ENCODE measurements at regions of chr4 and their contacts with region 1.

Region 1: GRCh38 chr4:121307445-121308327 is 73.1 kb downstream of the QRFPR start:
- DNase-seq: peak; percentile 63
- ATAC-seq: peak; percentile 69
- H3K4me3 Mint-ChIP-seq: no peak overlapping the region
- H3K27ac Mint-ChIP-seq: peak overlapping the region; percentile 48
- H3K4me1 Mint-ChIP-seq: peaks cover 16% of the 10 kb centered on the region
- H3K27me3 Mint-ChIP-seq: peaks cover 2% of the 10 kb centered on the region

Region 2: DNA sequence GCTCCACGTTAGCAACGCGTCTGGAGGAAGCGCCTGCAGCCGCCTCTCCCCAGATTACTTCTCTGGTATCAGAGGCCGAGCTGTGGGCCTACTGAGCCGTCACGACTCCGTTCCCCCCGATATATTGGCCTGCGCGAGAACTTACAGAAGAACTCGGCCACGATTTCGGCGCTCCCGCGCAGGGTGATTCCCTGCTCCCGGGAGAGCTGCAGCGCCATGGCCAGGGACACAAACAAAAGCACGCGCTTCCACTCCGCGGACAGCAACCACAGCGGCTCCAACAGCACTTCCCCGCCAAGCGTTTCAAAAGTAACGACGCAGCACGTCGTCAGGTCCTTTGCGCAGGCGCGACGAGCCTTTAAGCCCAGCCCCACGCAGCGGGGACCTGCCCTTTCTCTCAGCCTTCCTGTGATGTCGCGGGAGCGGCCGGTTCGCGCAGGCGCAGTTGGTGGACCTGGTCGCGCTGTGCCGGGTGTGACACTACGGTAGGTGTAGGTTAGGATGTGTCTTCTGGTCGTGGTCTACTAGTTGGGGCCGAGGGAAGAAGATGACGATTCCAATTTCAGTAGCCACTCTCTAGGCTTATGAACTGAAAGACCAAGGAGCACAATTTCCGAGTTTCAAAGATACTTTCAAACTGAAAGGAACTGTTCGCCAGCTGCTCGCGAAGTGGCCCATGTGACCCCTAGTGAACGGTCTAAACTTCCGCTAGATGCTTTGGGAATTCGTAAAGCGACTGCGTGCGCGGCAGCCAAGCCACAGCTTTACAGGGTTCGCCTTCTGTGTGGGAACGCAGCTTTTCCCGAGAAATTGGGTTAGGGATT is 1241.0 kb before region 1 on chr4 and contains the start of gene MAD2L1:
- CTCF ChIA-PET with region 1: no interaction called
- POLR2A ChIA-PET with region 1: no interaction called
- intact Hi-C with region 1: loop called in 1 of 2 experiments (anchors 5 kb)
- DNase-seq: peak; percentile 99
- ATAC-seq: peak; percentile 94
- H3K4me3 Mint-ChIP-seq: peak within 1 kb of the TSS; percentile 86
- H3K27ac Mint-ChIP-seq: peak within 1 kb of the TSS; percentile 97
- H3K4me1 Mint-ChIP-seq: peaks cover 58% of the 10 kb centered on the region
- H3K27me3 Mint-ChIP-seq: no peaks in the 10 kb centered on the region
- total RNA-seq, gene MAD2L1: 55.8 to 104 TPM

Region 3: GRCh38 chr4:120718979-120719566 is 588.6 kb before region 1 on chr4:
- CTCF ChIA-PET with region 1: no interaction called
- POLR2A ChIA-PET with region 1: no interaction called
- intact Hi-C with region 1: loop called (anchors 2 to 5 kb)
- DNase-seq: peak; percentile 41
- ATAC-seq: peak; percentile 53
- H3K4me3 Mint-ChIP-seq: no peak overlapping the region
- H3K27ac Mint-ChIP-seq: no peak overlapping the region
- H3K4me1 Mint-ChIP-seq: no peaks in the 10 kb centered on the region
- H3K27me3 Mint-ChIP-seq: peaks cover 11% of the 10 kb centered on the region

Region 4: GRCh38 chr4:121112530-121112929 is 195.2 kb before region 1 on chr4:
- CTCF ChIA-PET with region 1: interaction called, 4 read pairs
- POLR2A ChIA-PET with region 1: no interaction called
- intact Hi-C with region 1: loop called in 1 of 2 experiments (anchors 5 kb)
- DNase-seq: no peak
- ATAC-seq: no peak
- H3K4me3 Mint-ChIP-seq: no peak overlapping the region
- H3K27ac Mint-ChIP-seq: no peak overlapping the region
- H3K4me1 Mint-ChIP-seq: peaks cover 23% of the 10 kb centered on the region
- H3K27me3 Mint-ChIP-seq: no peaks in the 10 kb centered on the region

Region 5: DNA sequence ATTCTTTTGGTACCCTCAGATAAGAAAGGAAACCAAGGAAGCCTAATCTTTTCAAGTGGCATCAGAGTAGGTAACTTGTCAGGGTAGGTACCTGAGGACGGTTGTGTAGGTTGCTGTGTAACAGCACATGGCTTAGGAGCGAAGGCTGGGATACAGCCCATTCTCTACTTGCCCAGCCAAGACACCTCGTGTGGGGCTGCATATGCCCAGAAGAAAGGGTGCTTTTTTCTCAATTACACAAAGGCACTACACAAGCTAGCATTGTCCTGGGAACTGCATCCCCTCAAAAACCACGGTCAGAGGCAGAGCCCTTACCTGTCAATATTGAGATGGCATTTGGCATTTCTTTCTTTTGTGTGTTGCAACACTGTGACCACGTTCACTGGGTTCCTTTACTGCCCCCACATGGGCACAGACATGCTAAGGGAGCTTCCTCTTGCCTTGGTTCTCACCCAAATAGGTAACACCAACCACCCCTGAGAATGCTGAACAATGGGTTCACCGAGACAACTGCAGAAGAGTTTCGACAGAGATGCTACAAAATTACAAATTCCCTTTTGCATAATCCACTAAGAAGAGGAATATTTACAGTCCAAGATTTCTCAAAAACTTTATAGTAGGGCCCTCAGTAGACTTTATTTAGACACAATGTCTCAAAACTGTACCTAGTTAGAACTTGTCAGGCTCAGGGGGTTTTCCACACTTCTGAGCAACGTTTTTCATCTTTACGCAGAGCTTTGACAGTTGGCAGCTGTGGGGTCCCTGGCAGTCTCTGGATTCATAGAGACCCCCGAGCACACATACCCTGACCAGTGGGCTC is 107.7 kb before region 1 on chr4:
- CTCF ChIA-PET with region 1: interaction called, 16 read pairs
- POLR2A ChIA-PET with region 1: interaction called, 3 read pairs
- intact Hi-C with region 1: no loop called
- DNase-seq: peak; percentile 50
- ATAC-seq: peak; percentile 92
- H3K4me3 Mint-ChIP-seq: no peak overlapping the region
- H3K27ac Mint-ChIP-seq: peak overlapping the region; percentile 34
- H3K4me1 Mint-ChIP-seq: peaks cover 27% of the 10 kb centered on the region
- H3K27me3 Mint-ChIP-seq: no peaks in the 10 kb centered on the region

Region 6: DNA sequence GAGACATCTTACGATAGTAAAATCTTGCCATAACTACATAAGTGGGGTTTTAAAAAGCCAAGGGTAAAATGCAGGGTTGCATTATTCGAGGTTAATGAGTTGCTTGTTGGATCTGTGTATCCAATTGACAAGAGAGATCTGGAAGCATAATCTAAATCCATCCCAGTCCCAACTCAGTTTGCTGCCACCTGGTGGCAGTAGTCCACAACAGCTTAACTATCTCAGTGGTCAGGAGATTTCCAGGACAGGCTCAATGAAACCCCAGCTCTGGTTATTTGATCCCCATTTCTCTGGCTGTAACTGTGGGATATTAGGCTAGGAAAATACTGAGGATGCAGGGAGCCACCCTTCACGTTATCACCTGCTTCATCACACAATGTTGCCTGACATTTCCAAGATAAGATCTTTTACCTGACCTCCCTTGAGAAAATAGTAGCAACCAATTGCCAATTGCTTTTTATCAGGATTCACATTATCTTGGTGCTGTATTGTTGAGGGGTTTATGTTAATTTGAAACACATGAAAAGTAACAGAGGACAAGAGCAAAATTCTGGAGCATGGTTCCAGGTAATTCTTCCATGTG is 55.4 kb before region 1 on chr4:
- CTCF ChIA-PET with region 1: interaction called, 4 read pairs
- POLR2A ChIA-PET with region 1: no interaction called
- intact Hi-C with region 1: loop called (anchors 1 to 5 kb)
- DNase-seq: peak; percentile 73
- ATAC-seq: no peak
- H3K4me3 Mint-ChIP-seq: no peak overlapping the region
- H3K27ac Mint-ChIP-seq: no peak overlapping the region
- H3K4me1 Mint-ChIP-seq: peaks cover 67% of the 10 kb centered on the region
- H3K27me3 Mint-ChIP-seq: no peaks in the 10 kb centered on the region

Region 7: DNA sequence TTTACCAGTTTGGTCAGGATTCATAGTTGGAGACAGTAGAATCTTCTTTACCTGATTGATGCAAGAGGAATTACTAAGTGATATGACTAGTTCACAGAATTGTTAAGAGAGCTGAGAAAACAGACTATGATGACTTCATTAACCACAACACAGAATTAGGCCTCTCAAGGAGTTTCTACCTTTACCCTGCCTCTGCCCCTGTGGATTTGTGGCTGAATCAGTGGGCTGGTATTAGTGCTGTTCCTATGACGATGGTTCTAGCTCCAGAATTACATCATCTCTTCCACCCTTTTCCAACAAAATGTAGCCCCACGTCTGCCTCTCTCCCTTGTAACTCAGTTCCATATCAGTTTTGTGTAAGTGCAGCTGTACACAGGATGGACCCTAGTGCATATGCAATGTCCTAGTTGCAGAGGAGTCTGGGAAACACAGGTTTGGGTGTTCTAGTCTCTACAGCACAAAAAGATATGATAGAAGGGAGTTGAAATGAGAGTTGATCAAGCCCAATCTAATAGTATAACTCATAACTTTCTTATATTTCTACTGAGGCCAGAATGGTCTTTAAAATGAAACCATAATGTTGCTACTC is 289.8 kb after region 1 on chr4:
- CTCF ChIA-PET with region 1: no interaction called
- POLR2A ChIA-PET with region 1: no interaction called
- intact Hi-C with region 1: no loop called
- DNase-seq: peak; percentile 54
- ATAC-seq: peak; percentile 92
- H3K4me3 Mint-ChIP-seq: no peak overlapping the region
- H3K27ac Mint-ChIP-seq: no peak overlapping the region
- H3K4me1 Mint-ChIP-seq: peaks cover 3% of the 10 kb centered on the region
- H3K27me3 Mint-ChIP-seq: peaks cover 16% of the 10 kb centered on the region

Region 8: DNA sequence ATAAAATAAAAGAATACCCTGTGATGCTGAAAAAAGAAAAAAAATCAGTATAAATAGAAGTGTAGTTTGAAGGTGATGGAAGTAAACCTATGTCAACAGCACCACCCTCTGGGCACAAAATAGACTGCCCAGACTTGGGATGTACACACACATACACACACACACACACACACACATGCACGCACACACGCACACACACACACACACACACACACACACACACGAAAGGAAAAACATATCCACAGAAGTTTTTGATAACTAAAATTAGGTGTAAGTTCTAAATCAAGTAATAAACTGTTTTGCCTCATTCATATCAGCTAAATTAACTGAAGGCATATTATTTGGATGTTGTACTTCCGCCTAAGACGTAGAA is 348.6 kb after region 1 on chr4:
- CTCF ChIA-PET with region 1: no interaction called
- POLR2A ChIA-PET with region 1: no interaction called
- intact Hi-C with region 1: loop called in 1 of 2 experiments (anchors 2 kb)
- DNase-seq: peak; percentile 61
- ATAC-seq: peak; percentile 57
- H3K4me3 Mint-ChIP-seq: no peak overlapping the region
- H3K27ac Mint-ChIP-seq: no peak overlapping the region
- H3K4me1 Mint-ChIP-seq: no peaks in the 10 kb centered on the region
- H3K27me3 Mint-ChIP-seq: peaks cover 3% of the 10 kb centered on the region

Measured in activated CD4-positive, alpha-beta T cell treated with anti-CD3 and anti-CD28 coated beads for 36 hours (primary cell).